Activated naive CD4-positive, alpha-beta T cell treated with anti-CD3 and anti-CD28 coated beads for 36 hours (primary cell): ENCODE measurements at regions of chr7 and their contacts with region 1.

Region 1: DNA sequence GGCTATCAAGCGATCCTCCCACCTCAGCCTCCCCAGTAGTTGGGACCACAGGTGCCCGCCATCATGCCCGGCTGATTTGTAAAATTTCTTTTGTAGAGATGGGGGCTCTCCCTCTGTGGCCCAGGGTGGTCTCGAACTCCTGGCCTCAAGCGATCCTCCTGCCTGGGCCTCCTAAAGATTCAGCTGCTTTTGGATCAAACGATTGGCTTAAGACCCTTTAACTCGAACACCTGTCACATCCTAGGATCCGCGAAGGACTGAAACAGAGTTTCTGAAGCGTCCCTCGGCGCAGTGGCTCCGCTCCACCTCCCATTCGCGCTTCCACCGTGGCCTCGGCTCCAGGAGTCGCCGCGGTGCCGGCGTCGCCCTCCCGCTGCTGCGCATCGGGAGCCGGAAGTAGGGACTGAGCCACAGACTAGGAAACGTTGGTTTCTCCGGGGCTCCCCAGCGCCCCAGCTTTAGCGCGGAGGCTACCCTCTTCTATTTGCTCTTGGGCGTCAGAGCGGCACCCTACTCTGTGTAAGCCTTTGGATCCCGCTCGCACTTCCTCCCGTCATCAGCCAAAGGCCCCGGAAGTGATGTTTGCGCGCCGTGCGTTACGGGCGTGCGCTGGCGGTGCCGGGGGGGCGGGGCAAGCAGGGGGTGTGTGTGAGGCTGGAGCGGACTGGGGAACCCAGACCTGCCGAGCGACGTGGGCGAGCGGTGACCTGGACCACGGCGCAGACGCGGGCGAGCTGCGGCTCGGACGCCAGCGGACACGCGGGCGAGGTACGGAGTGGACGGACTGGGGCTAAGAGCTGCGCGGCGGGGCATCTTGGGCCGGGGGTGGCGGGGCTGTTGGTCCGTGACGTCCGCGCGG is 53.0 kb downstream of the KCTD7 start:
- DNase-seq: peak; percentile 95
- H3K4me3 Mint-ChIP-seq: peak overlapping the region; percentile 87
- H3K27ac Mint-ChIP-seq: peak overlapping the region; percentile 89
- H3K4me1 Mint-ChIP-seq: peaks cover 29% of the 10 kb centered on the region
- H3K27me3 Mint-ChIP-seq: no peaks in the 10 kb centered on the region

Region 2: GRCh38 chr7:65750511-65751344 is 931.0 kb before region 1 on chr7:
- CTCF ChIA-PET with region 1: no interaction called
- intact Hi-C with region 1: loop called (anchors 5 kb)
- DNase-seq: peak; percentile 89
- H3K4me3 Mint-ChIP-seq: peak overlapping the region; percentile 84
- H3K27ac Mint-ChIP-seq: peak overlapping the region; percentile 98
- H3K4me1 Mint-ChIP-seq: peaks cover 40% of the 10 kb centered on the region
- H3K27me3 Mint-ChIP-seq: no peaks in the 10 kb centered on the region

Region 3: GRCh38 chr7:66591799-66592596 is 89.7 kb before region 1 on chr7:
- CTCF ChIA-PET with region 1: no interaction called
- intact Hi-C with region 1: loop called (anchors 1 kb)
- DNase-seq: peak; percentile 96
- H3K4me3 Mint-ChIP-seq: peak overlapping the region; percentile 98
- H3K27ac Mint-ChIP-seq: peak overlapping the region; percentile 96
- H3K4me1 Mint-ChIP-seq: peaks cover 44% of the 10 kb centered on the region
- H3K27me3 Mint-ChIP-seq: no peaks in the 10 kb centered on the region

Region 4: DNA sequence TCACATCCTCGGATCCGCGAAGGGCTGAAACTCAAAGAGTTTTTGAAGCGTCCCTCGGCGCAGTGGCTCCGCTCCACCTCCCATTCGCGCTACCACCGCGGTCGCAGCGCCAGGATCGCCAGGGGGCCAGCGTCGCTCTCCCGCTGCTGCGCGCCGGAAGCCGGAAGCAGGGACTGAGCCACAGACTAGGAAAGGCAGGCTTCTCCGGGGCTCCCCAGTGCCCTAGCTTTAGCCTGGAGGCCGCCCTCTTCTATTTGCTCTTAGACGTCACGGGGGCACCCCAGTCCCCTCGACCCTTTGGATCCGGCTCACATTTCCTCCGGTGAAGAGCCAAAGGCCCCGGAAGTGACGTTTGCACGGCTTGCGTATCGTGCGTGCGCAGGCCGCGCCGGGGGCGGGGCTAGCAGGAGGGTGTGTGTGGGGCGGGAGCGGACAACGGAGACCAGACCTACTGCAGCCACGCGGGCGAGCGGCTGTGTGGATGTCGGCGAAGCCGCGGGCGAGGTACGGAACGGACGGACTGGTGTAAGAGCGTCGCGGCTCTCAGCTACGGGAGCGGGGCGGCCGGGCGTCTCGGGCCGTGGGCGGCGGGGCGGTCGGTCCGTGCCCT is 27.5 kb before region 1 on chr7:
- CTCF ChIA-PET with region 1: no interaction called
- intact Hi-C with region 1: loop called (anchors 1 kb)
- DNase-seq: peak; percentile 98
- H3K4me3 Mint-ChIP-seq: peak overlapping the region; percentile 95
- H3K27ac Mint-ChIP-seq: peak overlapping the region; percentile 95
- H3K4me1 Mint-ChIP-seq: peaks cover 30% of the 10 kb centered on the region
- H3K27me3 Mint-ChIP-seq: no peaks in the 10 kb centered on the region

Region 5: GRCh38 chr7:66740302-66740979 is 58.7 kb after region 1 on chr7 and contains the start of gene RABGEF1:
- CTCF ChIA-PET with region 1: interaction called, 3 read pairs
- intact Hi-C with region 1: loop called (anchors 1 kb)
- DNase-seq: peak; percentile 97
- H3K4me3 Mint-ChIP-seq: peak within 1 kb of the TSS; percentile 92
- H3K27ac Mint-ChIP-seq: peak within 1 kb of the TSS; percentile 92
- H3K4me1 Mint-ChIP-seq: peaks cover 47% of the 10 kb centered on the region
- H3K27me3 Mint-ChIP-seq: no peaks in the 10 kb centered on the region
- total RNA-seq, gene RABGEF1: 10.7 to 10.8 TPM

Region 6: DNA sequence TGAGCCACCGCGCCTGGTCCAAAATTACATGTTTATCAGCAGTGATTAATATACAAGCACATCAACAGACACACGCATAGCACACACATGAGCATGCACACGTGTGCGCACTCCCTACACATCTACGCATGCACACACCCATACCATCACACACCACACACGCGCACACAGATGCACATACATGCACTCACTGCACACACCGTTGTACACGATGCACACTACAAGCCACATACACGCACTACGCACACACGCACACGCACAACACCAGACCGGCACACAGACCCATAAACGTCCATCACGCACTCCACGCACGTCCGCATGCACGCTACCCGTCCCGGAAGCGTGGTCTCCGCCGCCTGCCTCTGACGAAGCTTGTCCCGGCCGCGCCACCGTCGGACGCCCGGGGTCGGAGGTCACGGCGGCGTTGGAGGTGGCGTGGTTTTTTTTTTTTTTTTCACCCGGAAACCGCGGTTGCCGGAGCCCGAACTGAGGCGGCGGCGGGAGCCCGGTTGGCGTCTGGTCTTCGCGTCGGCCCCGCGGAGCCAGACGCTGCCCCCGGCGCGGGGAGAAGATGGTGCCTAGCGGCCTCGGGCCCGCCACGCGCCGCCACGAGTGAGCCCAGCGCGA is 239.2 kb after region 1 on chr7 and contains the start of gene TMEM248:
- CTCF ChIA-PET with region 1: no interaction called
- intact Hi-C with region 1: loop called (anchors 2 kb)
- DNase-seq: peak; percentile 95
- H3K4me3 Mint-ChIP-seq: peak within 1 kb of the TSS; percentile 100
- H3K27ac Mint-ChIP-seq: peak within 1 kb of the TSS; percentile 96
- H3K4me1 Mint-ChIP-seq: peaks cover 38% of the 10 kb centered on the region
- H3K27me3 Mint-ChIP-seq: no peaks in the 10 kb centered on the region
- total RNA-seq, gene TMEM248: 51.4 to 54.0 TPM